Mammary epithelial cell (primary cell): ENCODE measurements at regions of chr4 and their contacts with region 1.

Region 1: DNA sequence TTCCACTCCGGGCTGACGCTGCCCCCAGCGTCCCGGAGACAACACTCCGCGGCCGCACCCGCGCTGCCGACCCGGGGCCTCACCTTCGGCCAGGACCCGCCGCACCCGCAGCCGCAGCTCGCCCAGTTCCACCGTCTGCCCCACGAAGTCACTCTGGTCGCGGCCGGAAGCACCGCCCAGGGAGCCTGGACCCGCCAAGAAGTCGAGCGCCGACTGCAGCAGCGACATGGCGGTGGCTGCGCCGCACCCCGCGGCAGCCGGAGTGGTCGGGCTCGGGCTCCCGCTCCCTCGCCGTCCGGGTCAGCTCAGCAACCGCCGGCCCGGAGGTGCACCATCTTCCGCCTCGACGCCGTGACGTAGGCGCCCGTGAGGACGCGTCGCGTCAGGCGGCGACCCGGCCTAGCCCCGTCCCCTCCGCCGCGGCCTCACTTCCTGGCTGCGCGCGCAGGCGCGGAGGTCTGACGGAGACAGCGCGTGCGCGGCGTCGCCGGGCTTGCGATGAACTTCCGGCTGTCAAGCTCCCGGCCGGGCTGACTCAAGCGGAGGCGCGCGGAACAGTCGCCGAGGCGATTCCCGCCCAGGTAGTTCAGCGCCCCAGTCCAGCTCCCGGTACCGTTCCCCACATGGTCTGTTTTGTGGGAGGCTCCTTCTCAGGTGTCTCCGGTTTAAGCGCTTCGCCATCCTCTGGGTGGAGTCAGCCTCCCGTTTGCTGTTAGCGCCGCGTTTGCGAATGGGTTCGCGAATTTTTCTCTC is at the starts of genes GAK and TMEM175:
- DNase-seq: peak; percentile 96
- H3K4me3 ChIP-seq: peak within 1 kb of the TSS; percentile 43 to 98 (median 98)
- H3K27ac ChIP-seq: peak within 1 kb of the TSS; percentile 63
- H3K4me1 ChIP-seq: peaks cover 21% of the 10 kb centered on the region
- H3K27me3 ChIP-seq: no peaks in the 10 kb centered on the region
- CTCF ChIP-seq: no peak
- total RNA-seq, gene GAK: 59.5 to 109 TPM
- total RNA-seq, gene TMEM175: 12.0 to 21.5 TPM

Region 2: GRCh38 chr4:781493-782216 is 150.5 kb before region 1 on chr4:
- CTCF ChIA-PET with region 1: no interaction called
- dilution Hi-C with region 1: no loop called
- in situ Hi-C with region 1: no loop called
- intact Hi-C with region 1: loop called (anchors 5 kb)
- DNase-seq: peak; percentile 100
- H3K4me3 ChIP-seq: peak overlapping the region; percentile 77 to 92 (median 91)
- H3K27ac ChIP-seq: peak overlapping the region; percentile 80
- H3K4me1 ChIP-seq: peaks cover 17% of the 10 kb centered on the region
- H3K27me3 ChIP-seq: peaks cover under 1% of the 10 kb centered on the region
- CTCF ChIP-seq: no peak

Region 3: GRCh38 chr4:915595-915994 is 16.5 kb before region 1 on chr4:
- CTCF ChIA-PET with region 1: no interaction called
- dilution Hi-C with region 1: no loop called
- in situ Hi-C with region 1: no loop called
- intact Hi-C with region 1: loop called (anchors 1 kb)
- DNase-seq: no peak
- H3K4me3 ChIP-seq: no peak overlapping the region
- H3K27ac ChIP-seq: no peak overlapping the region
- H3K4me1 ChIP-seq: peaks cover 20% of the 10 kb centered on the region
- H3K27me3 ChIP-seq: no peaks in the 10 kb centered on the region
- CTCF ChIP-seq: no peak